Naive thymus-derived CD8-positive, alpha-beta T cell (primary cell): ENCODE measurements at regions of chr7 and their contacts with region 1.

Region 1: DNA sequence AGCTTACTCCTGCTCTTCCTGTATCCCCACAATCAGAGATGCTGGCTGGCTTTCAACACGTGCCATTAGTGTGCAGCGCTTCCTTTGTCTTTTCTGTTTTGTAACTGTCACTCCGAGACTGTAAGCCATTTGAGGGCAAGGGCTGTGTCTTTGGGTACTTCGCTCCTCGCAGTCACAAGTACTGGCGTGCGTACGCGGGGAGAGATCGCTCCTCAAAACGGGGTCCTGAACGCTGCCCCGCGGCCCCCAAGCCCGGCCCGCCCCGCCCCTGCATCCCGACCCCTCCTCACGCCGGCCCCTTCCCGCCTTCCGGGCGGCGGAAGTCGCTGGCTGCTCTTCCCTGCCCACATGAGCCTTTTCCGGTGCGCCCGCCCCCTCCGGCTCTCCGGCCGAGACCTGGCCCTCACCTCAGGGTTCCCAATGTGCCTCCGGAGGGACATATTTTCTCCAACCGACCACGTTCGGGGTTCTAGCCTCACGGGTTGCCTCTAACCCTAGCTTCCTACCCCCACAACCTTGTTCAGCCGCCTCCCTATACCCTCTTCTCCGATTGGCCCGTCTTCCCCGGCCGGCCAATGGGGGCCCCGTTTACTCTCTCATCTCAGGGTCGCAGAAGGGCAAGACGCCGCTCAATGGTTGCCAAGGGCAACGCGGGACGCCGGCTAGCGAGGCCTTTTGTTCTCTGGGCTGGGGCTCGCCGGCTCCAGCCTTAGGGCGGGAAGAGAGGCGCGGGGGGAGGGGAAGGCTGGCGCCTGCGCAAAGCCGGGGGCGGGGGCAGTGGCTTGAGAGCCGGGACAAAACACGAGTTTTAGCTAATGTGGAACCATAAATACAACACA is at the start of gene CEP41:
- DNase-seq: peak; percentile 86 to 96 (median 94)
- ATAC-seq: peak; percentile 94 to 98
- H3K4me3 Mint-ChIP-seq: peak within 1 kb of the TSS; percentile 97 to 100 (median 99)
- H3K27ac Mint-ChIP-seq: peak within 1 kb of the TSS; percentile 93 to 99 (median 98)
- H3K4me1 Mint-ChIP-seq: peaks cover 35 to 71% (median 52%) of the 10 kb centered on the region in 4 donors
- H3K27me3 Mint-ChIP-seq: no peaks in the 10 kb centered on the region
- polyA plus RNA-seq, gene CEP41: 54.8 to 74.5 (median 61.0) TPM

Region 2: GRCh38 chr7:130096243-130096827 is 344.4 kb before region 1 on chr7:
- POLR2A ChIA-PET with region 1: no interaction called
- DNase-seq: no peak
- ATAC-seq: no peak
- H3K4me3 Mint-ChIP-seq: no peak overlapping the region
- H3K27ac Mint-ChIP-seq: no peak overlapping the region
- H3K4me1 Mint-ChIP-seq: peaks cover 5 to 31% (median 19%) of the 10 kb centered on the region in 4 donors
- H3K27me3 Mint-ChIP-seq: no peaks in the 10 kb centered on the region

Region 3: DNA sequence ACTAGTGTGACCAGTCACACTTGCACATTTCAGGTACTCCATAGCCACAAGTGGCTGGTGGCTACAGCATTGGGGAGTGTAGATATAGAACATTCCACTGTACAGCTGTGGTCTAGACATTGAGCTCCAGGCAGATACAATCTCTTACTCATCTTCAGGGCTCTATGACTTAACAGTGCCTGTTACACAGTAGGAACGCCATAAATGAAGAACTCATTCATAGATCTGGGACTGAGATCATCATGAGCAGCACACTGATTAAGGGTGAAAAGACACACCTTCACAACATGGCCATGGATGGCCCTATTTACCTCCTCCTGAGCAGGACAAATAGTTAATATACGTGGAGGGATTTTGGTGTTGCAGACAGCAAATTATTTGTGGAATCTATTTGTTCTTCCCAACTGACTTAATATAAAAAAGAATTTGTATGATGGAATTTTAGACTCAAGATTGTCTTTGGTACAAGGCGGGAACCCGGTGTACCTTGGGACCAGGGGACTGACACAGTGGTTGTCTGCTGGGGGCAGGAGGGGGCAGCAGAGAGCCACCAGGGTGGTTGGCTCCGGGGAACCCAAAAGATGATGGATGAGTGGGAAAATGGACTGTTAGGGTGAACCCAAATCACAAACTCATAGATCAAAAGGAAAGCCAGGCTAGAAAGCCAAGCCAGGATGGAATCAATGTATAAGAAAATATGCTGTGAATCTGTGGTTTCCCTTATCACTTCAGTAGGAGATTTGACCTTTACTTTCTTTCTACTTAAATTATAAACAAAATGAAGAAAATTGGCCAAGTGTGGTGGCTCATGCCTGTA is 198.3 kb before region 1 on chr7:
- POLR2A ChIA-PET with region 1: no interaction called
- DNase-seq: peak; percentile 28 to 79 (median 61)
- ATAC-seq: peak; percentile 81 to 97
- H3K4me3 Mint-ChIP-seq: peak overlapping the region in 3 of 10 donors; percentile 36 to 49 (median 38)
- H3K27ac Mint-ChIP-seq: peak overlapping the region in 1 of 10 donors; percentile 80
- H3K4me1 Mint-ChIP-seq: peaks cover 0 to 7% (median 4%) of the 10 kb centered on the region in 4 donors
- H3K27me3 Mint-ChIP-seq: no peaks in the 10 kb centered on the region

Region 4: DNA sequence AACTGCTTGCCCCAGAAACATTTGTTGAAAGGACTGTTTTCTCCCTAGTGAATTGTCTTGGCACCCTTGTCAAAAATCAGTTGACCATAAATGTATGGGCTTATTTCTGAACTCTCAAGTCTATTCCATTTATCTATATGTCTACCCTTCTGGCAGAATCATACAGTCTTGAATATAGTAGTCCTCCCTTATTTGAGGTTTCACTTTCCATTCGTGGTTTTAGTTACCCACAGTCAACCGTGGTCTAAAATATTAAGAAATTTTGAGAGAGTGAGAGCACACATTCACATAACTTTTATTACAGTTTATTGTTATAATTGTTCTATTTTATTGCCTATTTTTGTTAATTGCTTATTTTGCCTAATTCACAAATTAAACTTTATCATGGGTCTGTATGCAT is 17.5 kb after region 1 on chr7:
- POLR2A ChIA-PET with region 1: interaction called, 11 read pairs
- DNase-seq: peak in 3 of 10 donors; percentile 15 to 39 (median 31)
- ATAC-seq: peak; percentile 75 to 86
- H3K4me3 Mint-ChIP-seq: peak overlapping the region; percentile 54 to 76 (median 71)
- H3K27ac Mint-ChIP-seq: peak overlapping the region; percentile 24 to 89 (median 82)
- H3K4me1 Mint-ChIP-seq: peaks cover 18 to 49% (median 23%) of the 10 kb centered on the region in 4 donors
- H3K27me3 Mint-ChIP-seq: no peaks in the 10 kb centered on the region